CD4-positive, alpha-beta memory T cell (primary cell): ENCODE measurements at regions of chr2 and their contacts with region 1.

Region 1: GRCh38 chr2:9770308-9771100 is 72.8 kb upstream of the TAF1B start:
- DNase-seq: peak; percentile 49 to 63 (median 58)
- H3K4me3 ChIP-seq: no peak overlapping the region
- H3K4me3 Mint-ChIP-seq: peak overlapping the region in 1 of 8 donors; percentile 55
- H3K27ac ChIP-seq: no peak overlapping the region
- H3K27ac Mint-ChIP-seq: peak overlapping the region in 5 of 7 donors; percentile 15 to 88 (median 46)
- H3K4me1 ChIP-seq: peaks cover 20% of the 10 kb centered on the region
- H3K4me1 Mint-ChIP-seq: peaks cover 3 to 21% (median 13%) of the 10 kb centered on the region in 4 donors
- H3K27me3 ChIP-seq: no peaks in the 10 kb centered on the region
- H3K27me3 Mint-ChIP-seq: no peaks in the 10 kb centered on the region

Region 2: GRCh38 chr2:9712263-9712662 is 58.2 kb before region 1 on chr2:
- CTCF ChIA-PET with region 1: interaction called, 10 read pairs
- POLR2A ChIA-PET with region 1: no interaction called
- intact Hi-C with region 1: no loop called
- DNase-seq: peak in 2 of 5 donors; percentile 21 to 25
- H3K4me3 ChIP-seq: peak overlapping the region in 1 of 2 donors; percentile 42
- H3K4me3 Mint-ChIP-seq: peak overlapping the region; percentile 60 to 86 (median 82)
- H3K27ac ChIP-seq: peak overlapping the region; percentile 61
- H3K27ac Mint-ChIP-seq: peak overlapping the region; percentile 63 to 95 (median 88)
- H3K4me1 ChIP-seq: peaks cover 49% of the 10 kb centered on the region
- H3K4me1 Mint-ChIP-seq: peaks cover 21 to 49% (median 38%) of the 10 kb centered on the region in 4 donors
- H3K27me3 ChIP-seq: no peaks in the 10 kb centered on the region
- H3K27me3 Mint-ChIP-seq: no peaks in the 10 kb centered on the region

Region 3: DNA sequence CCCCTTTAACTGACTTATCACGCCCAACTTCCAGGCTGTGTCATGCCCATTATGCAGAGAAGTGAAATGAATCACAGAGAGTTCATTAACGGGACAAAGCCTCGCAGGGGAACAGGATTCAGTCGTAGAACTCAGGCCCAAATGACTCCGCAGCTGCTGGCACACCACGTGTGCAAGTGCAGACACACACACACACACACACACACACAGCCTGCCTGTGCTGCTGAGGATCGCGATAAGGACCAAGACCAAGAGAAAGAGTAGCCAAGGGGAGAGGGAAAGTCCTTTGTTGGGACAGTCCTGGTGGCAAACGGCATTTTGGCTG is 17.3 kb before region 1 on chr2:
- CTCF ChIA-PET with region 1: interaction called, 57 read pairs
- POLR2A ChIA-PET with region 1: interaction called, 15 read pairs
- intact Hi-C with region 1: no loop called
- DNase-seq: peak in 4 of 5 donors; percentile 35 to 79 (median 48)
- H3K4me3 ChIP-seq: peak overlapping the region in 1 of 2 donors; percentile 52
- H3K4me3 Mint-ChIP-seq: peak overlapping the region; percentile 80 to 96 (median 94)
- H3K27ac ChIP-seq: peak overlapping the region; percentile 53
- H3K27ac Mint-ChIP-seq: peak overlapping the region; percentile 90 to 100 (median 99)
- H3K4me1 ChIP-seq: peaks cover 49% of the 10 kb centered on the region
- H3K4me1 Mint-ChIP-seq: peaks cover 29 to 72% (median 50%) of the 10 kb centered on the region in 4 donors
- H3K27me3 ChIP-seq: no peaks in the 10 kb centered on the region
- H3K27me3 Mint-ChIP-seq: no peaks in the 10 kb centered on the region

Region 4: GRCh38 chr2:9867881-9868280 is 97.4 kb after region 1 on chr2:
- CTCF ChIA-PET with region 1: no interaction called
- POLR2A ChIA-PET with region 1: no interaction called
- intact Hi-C with region 1: no loop called
- DNase-seq: no peak
- H3K4me3 ChIP-seq: no peak overlapping the region
- H3K4me3 Mint-ChIP-seq: no peak overlapping the region
- H3K27ac ChIP-seq: no peak overlapping the region
- H3K27ac Mint-ChIP-seq: peak overlapping the region in 1 of 7 donors; percentile 43
- H3K4me1 ChIP-seq: no peaks in the 10 kb centered on the region
- H3K4me1 Mint-ChIP-seq: peaks cover 0 to 3% (median 1%) of the 10 kb centered on the region in 4 donors
- H3K27me3 ChIP-seq: no peaks in the 10 kb centered on the region
- H3K27me3 Mint-ChIP-seq: no peaks in the 10 kb centered on the region